ENCODE measurements at regions of chr3 and their contacts with region 1.

Region 1: GRCh38 chr3:142124243-142124642 is 25.1 kb downstream of the TFDP2 start:
- DNase-seq: no peak
- H3K4me3 ChIP-seq: no peak overlapping the region
- H3K27ac ChIP-seq: no peak overlapping the region
- H3K4me1 ChIP-seq: no peaks in the 10 kb centered on the region
- H3K27me3 ChIP-seq: no peaks in the 10 kb centered on the region
- CTCF ChIP-seq: no peak
- EP300 ChIP-seq: no peak
- POLR2A ChIP-seq: no peak
- RAD21 ChIP-seq: no peak

Region 2: GRCh38 chr3:142211035-142211434 is 86.8 kb after region 1 on chr3:
- CTCF ChIA-PET with region 1: interaction called, 10 read pairs
- POLR2A ChIA-PET with region 1: no interaction called
- DNase-seq: no peak
- H3K4me3 ChIP-seq: no peak overlapping the region
- H3K27ac ChIP-seq: no peak overlapping the region
- H3K4me1 ChIP-seq: peaks cover 0 to under 1% (median 0%) of the 10 kb centered on the region in 4 experiments; a peak in 2 of 7 replicates
- H3K27me3 ChIP-seq: no peaks in the 10 kb centered on the region
- CTCF ChIP-seq: peak; percentile 63 to 81 (median 77)
- EP300 ChIP-seq: no peak
- POLR2A ChIP-seq: no peak
- RAD21 ChIP-seq: peak; percentile 81 to 83

Region 3: DNA sequence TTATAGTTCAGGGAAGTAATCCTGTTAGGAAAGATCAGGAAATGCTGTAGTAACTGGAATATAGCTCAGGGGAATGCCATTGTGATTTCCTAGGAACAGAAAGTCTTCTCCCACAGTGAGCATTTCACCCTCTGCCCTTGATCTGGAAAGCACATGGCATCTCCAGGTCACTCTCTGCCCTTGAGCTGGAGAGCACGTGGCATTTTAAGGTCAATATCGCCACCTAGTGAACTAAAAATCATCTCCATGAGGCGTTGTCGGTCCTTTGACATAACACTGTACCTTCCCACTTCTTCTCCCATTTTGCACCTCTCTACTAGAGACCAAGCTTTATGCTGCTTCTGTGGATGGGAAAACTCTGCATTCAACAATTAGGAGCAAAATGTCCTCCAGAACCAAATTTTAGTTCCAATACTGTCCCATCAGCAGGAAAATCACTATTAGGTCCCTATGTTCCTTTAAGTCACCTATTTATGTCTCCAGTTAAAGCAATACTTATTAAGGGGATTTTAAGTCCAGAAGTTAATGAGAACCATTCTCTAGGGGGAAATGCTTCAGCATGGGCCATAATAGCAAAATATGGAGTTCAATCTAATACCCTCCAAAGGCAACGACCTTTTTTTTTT is 155.8 kb after region 1 on chr3:
- CTCF ChIA-PET with region 1: interaction called, 11 read pairs
- POLR2A ChIA-PET with region 1: no interaction called
- DNase-seq: peak in 1 of 2 experiments; percentile 15
- H3K4me3 ChIP-seq: no peak overlapping the region
- H3K27ac ChIP-seq: no peak overlapping the region
- H3K4me1 ChIP-seq: no peaks in the 10 kb centered on the region
- H3K27me3 ChIP-seq: peaks cover 0 to 5% (median 5%) of the 10 kb centered on the region in 4 experiments; a peak in 5 of 7 replicates
- CTCF ChIP-seq: peak; percentile 24 to 84 (median 73)
- EP300 ChIP-seq: no peak
- POLR2A ChIP-seq: no peak
- RAD21 ChIP-seq: peak; percentile 93

Measured in H1 (cell line).